ENCODE measurements at regions of chr19 and their contacts with region 1.

Region 1: GRCh38 chr19:12669270-12670158 is 2.9 kb downstream of the WDR83 start:
- DNase-seq: peak; percentile 92
- ATAC-seq: peak; percentile 64

Region 2: GRCh38 chr19:12564016-12564664 is 105.4 kb before region 1 on chr19:
- intact Hi-C with region 1: loop called (anchors 5 kb)
- DNase-seq: peak; percentile 92
- ATAC-seq: peak; percentile 96

Measured in Right ventricle myocardium inferior (tissue), 1 donor.